Heart right ventricle (tissue), 16 donors: ENCODE measurements at regions of chr9 and their contacts with region 1.

Region 1: DNA sequence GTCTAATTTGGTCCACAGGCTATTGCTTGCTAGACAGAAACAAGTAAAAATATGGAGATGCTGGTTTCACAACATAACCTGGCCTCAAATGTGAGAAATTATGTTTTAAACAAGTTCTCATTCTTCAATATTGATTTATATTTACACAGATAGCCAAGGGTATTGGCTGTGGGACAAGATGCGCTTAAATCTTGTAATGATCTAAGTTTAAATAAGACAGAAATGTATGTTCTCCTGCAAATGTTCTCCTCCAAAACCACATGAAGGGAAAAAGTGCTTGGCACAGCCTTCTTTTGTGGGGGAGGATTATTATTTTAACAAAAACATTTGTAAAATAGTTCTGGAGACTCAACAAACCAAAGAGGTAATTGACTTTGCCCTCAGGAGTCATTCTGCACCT is 356.0 kb downstream of the DMAC1 start:
- DNase-seq: no peak
- ATAC-seq: no peak
- H3K4me3 ChIP-seq: no peak overlapping the region
- H3K27ac ChIP-seq: no peak overlapping the region
- H3K4me1 ChIP-seq: no peaks in the 10 kb centered on the region
- H3K27me3 ChIP-seq: no peaks in the 10 kb centered on the region
- CTCF ChIP-seq: no peak

Region 2: DNA sequence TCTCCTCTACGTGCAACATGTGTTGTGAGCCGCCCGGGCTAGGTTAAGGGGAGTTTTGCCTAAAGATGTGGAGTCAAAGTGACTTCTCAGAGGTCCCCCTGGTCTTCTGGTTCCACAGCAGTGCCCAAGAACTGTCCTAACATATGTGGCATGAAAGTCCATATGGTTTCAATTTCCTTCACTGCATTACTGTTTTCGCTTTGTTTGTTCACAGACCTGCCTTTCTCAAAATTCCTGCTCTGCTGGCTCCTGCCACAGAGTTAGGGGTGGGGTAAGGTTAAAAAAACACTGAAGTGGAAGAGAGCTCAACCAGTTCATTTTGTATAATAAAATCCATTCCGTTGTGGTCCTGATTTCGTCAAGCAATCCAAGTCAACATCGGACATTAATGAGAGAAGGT is 66.7 kb after region 1 on chr9:
- intact Hi-C with region 1: loop called in 1 of 10 experiments (anchors 10 kb)
- DNase-seq: no peak
- ATAC-seq: no peak
- H3K4me3 ChIP-seq: no peak overlapping the region
- H3K27ac ChIP-seq: peak overlapping the region in 4 of 10 donors; percentile 28 to 61 (median 41)
- H3K4me1 ChIP-seq: peaks cover 0 to 19% (median 0%) of the 10 kb centered on the region in 9 donors
- H3K27me3 ChIP-seq: no peaks in the 10 kb centered on the region
- CTCF ChIP-seq: no peak